Spleen (tissue), 13 donors: ENCODE measurements at regions of chr7 and their contacts with region 1.

Region 1: GRCh38 chr7:148939128-148939755 is 55.2 kb upstream of the EZH2 start:
- DNase-seq: no peak
- H3K4me3 ChIP-seq: no peak overlapping the region
- H3K27ac ChIP-seq: no peak overlapping the region
- H3K4me1 ChIP-seq: peaks cover 11 to 31% (median 17%) of the 10 kb centered on the region in 6 donors
- H3K27me3 ChIP-seq: no peaks in the 10 kb centered on the region
- CTCF ChIP-seq: no peak
- POLR2A ChIP-seq: no peak

Region 2: GRCh38 chr7:148773334-148773733 is 165.9 kb before region 1 on chr7:
- intact Hi-C with region 1: no loop called
- DNase-seq: no peak
- H3K4me3 ChIP-seq: no peak overlapping the region
- H3K27ac ChIP-seq: peak overlapping the region in 7 of 8 donors; percentile 10 to 63 (median 47)
- H3K4me1 ChIP-seq: peaks cover 9 to 23% (median 16%) of the 10 kb centered on the region in 6 donors
- H3K27me3 ChIP-seq: no peaks in the 10 kb centered on the region
- CTCF ChIP-seq: no peak
- POLR2A ChIP-seq: no peak

Region 3: GRCh38 chr7:148884299-148885022 is 54.8 kb before region 1 on chr7:
- intact Hi-C with region 1: loop called (anchors 10 kb)
- DNase-seq: peak; percentile 98
- H3K4me3 ChIP-seq: peak overlapping the region; percentile 65 to 98 (median 93)
- H3K27ac ChIP-seq: peak overlapping the region; percentile 88 to 96 (median 94)
- H3K4me1 ChIP-seq: peaks cover 0 to 32% (median 17%) of the 10 kb centered on the region in 6 donors
- H3K27me3 ChIP-seq: peaks cover 0 to 8% (median 0%) of the 10 kb centered on the region in 7 donors
- CTCF ChIP-seq: no peak
- POLR2A ChIP-seq: peak in 2 of 3 donors; percentile 3 to 72